ENCODE measurements at regions of chr12 and their contacts with region 1.

Region 1: GRCh38 chr12:92570056-92570753 is 132.6 kb upstream of the PLEKHG7 start:
- DNase-seq: peak; percentile 86
- ATAC-seq: peak; percentile 91
- H3K4me3 ChIP-seq: peak overlapping the region in 3 of 5 experiments; percentile 30 to 55 (median 53)
- H3K4me3 Mint-ChIP-seq: no peak overlapping the region
- H3K27ac ChIP-seq: peak overlapping the region; percentile 29 to 75
- H3K27ac Mint-ChIP-seq: no peak overlapping the region
- H3K4me1 ChIP-seq: peaks cover 23 to 25% of the 10 kb centered on the region in 2 donors
- H3K4me1 Mint-ChIP-seq: peaks cover 26% of the 10 kb centered on the region
- H3K27me3 ChIP-seq: no peaks in the 10 kb centered on the region
- H3K27me3 Mint-ChIP-seq: no peaks in the 10 kb centered on the region
- CTCF ChIP-seq: peak; percentile 99

Region 2: DNA sequence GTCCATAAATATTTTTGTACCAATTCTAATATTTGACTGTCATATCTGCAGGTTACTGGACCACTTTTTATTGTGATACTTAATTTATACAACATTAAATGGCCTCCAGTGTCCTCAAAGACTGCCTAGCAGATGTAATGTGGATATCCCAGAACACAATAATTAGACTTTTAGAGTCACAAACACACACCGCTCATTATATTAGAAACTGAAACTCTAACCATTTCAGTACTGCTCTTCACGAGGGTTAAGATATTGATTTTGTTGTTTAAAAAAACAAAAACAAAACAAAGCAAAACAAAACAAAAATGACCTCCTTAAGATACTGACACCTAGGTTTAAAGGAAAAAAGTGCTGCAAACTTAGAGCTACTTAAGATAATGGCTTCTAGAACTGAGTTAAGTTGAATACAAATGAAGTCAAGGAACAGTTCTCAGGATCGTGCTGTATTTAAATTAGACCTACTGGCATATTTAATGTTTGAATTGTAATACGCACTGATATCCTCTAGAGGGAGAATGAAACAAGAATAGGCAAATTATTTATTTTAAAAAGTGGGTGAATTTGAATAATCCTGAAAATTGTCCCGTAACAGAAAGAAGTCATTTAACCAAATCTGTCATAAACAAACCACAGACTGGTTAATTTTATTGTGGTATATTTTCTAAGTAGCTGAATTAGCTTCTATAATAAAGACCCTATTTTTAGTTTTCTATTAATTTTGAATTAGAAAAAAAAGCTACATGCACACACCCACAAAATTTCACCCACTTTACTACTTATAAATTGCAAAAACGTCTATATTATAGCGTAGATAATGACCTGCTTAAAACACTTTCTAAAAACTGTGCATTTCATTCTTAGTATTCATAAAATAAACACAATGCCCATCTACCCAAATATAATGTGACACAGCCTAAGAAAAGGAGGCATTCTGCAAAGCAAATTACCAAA is 992.3 kb before region 1 on chr12:
- CTCF ChIA-PET with region 1: interaction called, 4 read pairs
- POLR2A ChIA-PET with region 1: no interaction called
- intact Hi-C with region 1: loop called (anchors 1 kb)
- DNase-seq: peak; percentile 45
- ATAC-seq: peak; percentile 82
- H3K4me3 ChIP-seq: peak overlapping the region in 2 of 5 experiments; percentile 28 to 51
- H3K4me3 Mint-ChIP-seq: peak overlapping the region; percentile 68
- H3K27ac ChIP-seq: no peak overlapping the region
- H3K27ac Mint-ChIP-seq: no peak overlapping the region
- H3K4me1 ChIP-seq: peaks cover 0 to 5% of the 10 kb centered on the region in 2 donors
- H3K4me1 Mint-ChIP-seq: peaks cover 4% of the 10 kb centered on the region
- H3K27me3 ChIP-seq: peaks cover 0 to under 1% (median 0%) of the 10 kb centered on the region in 4 experiments
- H3K27me3 Mint-ChIP-seq: peaks cover 20% of the 10 kb centered on the region
- CTCF ChIP-seq: peak; percentile 92

Region 3: GRCh38 chr12:92094751-92095161 is 475.4 kb before region 1 on chr12:
- CTCF ChIA-PET with region 1: no interaction called
- POLR2A ChIA-PET with region 1: no interaction called
- intact Hi-C with region 1: no loop called
- DNase-seq: no peak
- ATAC-seq: no peak
- H3K4me3 ChIP-seq: no peak overlapping the region
- H3K4me3 Mint-ChIP-seq: no peak overlapping the region
- H3K27ac ChIP-seq: no peak overlapping the region
- H3K27ac Mint-ChIP-seq: no peak overlapping the region
- H3K4me1 ChIP-seq: peaks cover 10 to 13% of the 10 kb centered on the region in 2 donors
- H3K4me1 Mint-ChIP-seq: peaks cover 17% of the 10 kb centered on the region
- H3K27me3 ChIP-seq: no peaks in the 10 kb centered on the region
- H3K27me3 Mint-ChIP-seq: no peaks in the 10 kb centered on the region
- CTCF ChIP-seq: no peak

Region 4: GRCh38 chr12:92136965-92137721 is 433.1 kb before region 1 on chr12:
- CTCF ChIA-PET with region 1: interaction called, 10 read pairs
- POLR2A ChIA-PET with region 1: interaction called, 3 read pairs
- intact Hi-C with region 1: no loop called
- DNase-seq: no peak
- ATAC-seq: no peak
- H3K4me3 ChIP-seq: peak overlapping the region; percentile 28 to 100 (median 96)
- H3K4me3 Mint-ChIP-seq: peak overlapping the region; percentile 98
- H3K27ac ChIP-seq: peak overlapping the region in 1 of 2 donors; percentile 13
- H3K27ac Mint-ChIP-seq: peak overlapping the region; percentile 23
- H3K4me1 ChIP-seq: peaks cover 71 to 80% of the 10 kb centered on the region in 2 donors
- H3K4me1 Mint-ChIP-seq: peaks cover 74% of the 10 kb centered on the region
- H3K27me3 ChIP-seq: no peaks in the 10 kb centered on the region
- H3K27me3 Mint-ChIP-seq: no peaks in the 10 kb centered on the region
- CTCF ChIP-seq: no peak

Region 5: GRCh38 chr12:92363295-92364146 is 206.7 kb before region 1 on chr12:
- CTCF ChIA-PET with region 1: interaction called, 30 read pairs
- POLR2A ChIA-PET with region 1: interaction called, 9 read pairs
- intact Hi-C with region 1: loop called (anchors 2 kb)
- DNase-seq: peak; percentile 88
- ATAC-seq: peak; percentile 71
- H3K4me3 ChIP-seq: peak overlapping the region; percentile 12 to 57 (median 54)
- H3K4me3 Mint-ChIP-seq: peak overlapping the region; percentile 92
- H3K27ac ChIP-seq: peak overlapping the region; percentile 95 to 96
- H3K27ac Mint-ChIP-seq: peak overlapping the region; percentile 89
- H3K4me1 ChIP-seq: peaks cover 55 to 57% of the 10 kb centered on the region in 2 donors
- H3K4me1 Mint-ChIP-seq: peaks cover 73% of the 10 kb centered on the region
- H3K27me3 ChIP-seq: no peaks in the 10 kb centered on the region
- H3K27me3 Mint-ChIP-seq: no peaks in the 10 kb centered on the region
- CTCF ChIP-seq: no peak

Region 6: GRCh38 chr12:92505254-92506231 is 64.7 kb before region 1 on chr12:
- CTCF ChIA-PET with region 1: interaction called, 38 read pairs
- POLR2A ChIA-PET with region 1: interaction called, 7 read pairs
- intact Hi-C with region 1: loop called (anchors 1 kb)
- DNase-seq: peak; percentile 75
- ATAC-seq: peak; percentile 61
- H3K4me3 ChIP-seq: peak overlapping the region; percentile 16 to 62 (median 43)
- H3K4me3 Mint-ChIP-seq: peak overlapping the region; percentile 73
- H3K27ac ChIP-seq: peak overlapping the region; percentile 79 to 91
- H3K27ac Mint-ChIP-seq: peak overlapping the region; percentile 87
- H3K4me1 ChIP-seq: peaks cover 60 to 62% of the 10 kb centered on the region in 2 donors
- H3K4me1 Mint-ChIP-seq: peaks cover 65% of the 10 kb centered on the region
- H3K27me3 ChIP-seq: no peaks in the 10 kb centered on the region
- H3K27me3 Mint-ChIP-seq: no peaks in the 10 kb centered on the region
- CTCF ChIP-seq: no peak

Region 7: GRCh38 chr12:92649511-92650227 is 79.5 kb after region 1 on chr12:
- CTCF ChIA-PET with region 1: interaction called, 39 read pairs
- POLR2A ChIA-PET with region 1: no interaction called
- intact Hi-C with region 1: loop called (anchors 1 kb)
- DNase-seq: peak; percentile 76
- ATAC-seq: peak; percentile 89
- H3K4me3 ChIP-seq: no peak overlapping the region
- H3K4me3 Mint-ChIP-seq: no peak overlapping the region
- H3K27ac ChIP-seq: no peak overlapping the region
- H3K27ac Mint-ChIP-seq: no peak overlapping the region
- H3K4me1 ChIP-seq: no peaks in the 10 kb centered on the region
- H3K4me1 Mint-ChIP-seq: peaks cover 3% of the 10 kb centered on the region
- H3K27me3 ChIP-seq: no peaks in the 10 kb centered on the region
- H3K27me3 Mint-ChIP-seq: peaks cover 9% of the 10 kb centered on the region
- CTCF ChIP-seq: peak; percentile 82

Measured in B cell (primary cell).